A549 (cell line): ENCODE measurements at regions of chr17 and their contacts with region 1.

Region 1: GRCh38 chr17:57987580-57988421 is at the start of gene VEZF1:
- DNase-seq: peak; percentile 76 to 85
- ATAC-seq: peak; percentile 65 to 70
- H3K4me3 ChIP-seq: peak within 1 kb of the TSS; percentile 77
- H3K27ac ChIP-seq: peak within 1 kb of the TSS; percentile 96 to 98
- H3K4me1 ChIP-seq: peaks cover 75% of the 10 kb centered on the region
- CTCF ChIP-seq: no peak
- EP300 ChIP-seq: no peak
- POLR2A ChIP-seq: peak; percentile 18; the same call in 1 of the 2 replicates
- RAD21 ChIP-seq: 0 out of 5 replicates have a peak, but pooled peaks of 1 of the 2 experiments have one; percentile 9
- polyA plus RNA-seq, gene VEZF1: 57.7 and 63.8 TPM in 2 replicates

Region 2: GRCh38 chr17:57685505-57686132 is 302.2 kb before region 1 on chr17:
- CTCF ChIA-PET with region 1: no interaction called
- POLR2A ChIA-PET with region 1: no interaction called
- DNase-seq: no peak
- ATAC-seq: 0 out of 6 replicates have a peak, but pooled peaks of 1 of the 2 experiments have one; percentile 27
- H3K4me3 ChIP-seq: no peak overlapping the region
- H3K27ac ChIP-seq: no peak overlapping the region
- H3K4me1 ChIP-seq: no peaks in the 10 kb centered on the region
- CTCF ChIP-seq: no peak
- EP300 ChIP-seq: no peak
- POLR2A ChIP-seq: no peak
- RAD21 ChIP-seq: no peak

Region 3: DNA sequence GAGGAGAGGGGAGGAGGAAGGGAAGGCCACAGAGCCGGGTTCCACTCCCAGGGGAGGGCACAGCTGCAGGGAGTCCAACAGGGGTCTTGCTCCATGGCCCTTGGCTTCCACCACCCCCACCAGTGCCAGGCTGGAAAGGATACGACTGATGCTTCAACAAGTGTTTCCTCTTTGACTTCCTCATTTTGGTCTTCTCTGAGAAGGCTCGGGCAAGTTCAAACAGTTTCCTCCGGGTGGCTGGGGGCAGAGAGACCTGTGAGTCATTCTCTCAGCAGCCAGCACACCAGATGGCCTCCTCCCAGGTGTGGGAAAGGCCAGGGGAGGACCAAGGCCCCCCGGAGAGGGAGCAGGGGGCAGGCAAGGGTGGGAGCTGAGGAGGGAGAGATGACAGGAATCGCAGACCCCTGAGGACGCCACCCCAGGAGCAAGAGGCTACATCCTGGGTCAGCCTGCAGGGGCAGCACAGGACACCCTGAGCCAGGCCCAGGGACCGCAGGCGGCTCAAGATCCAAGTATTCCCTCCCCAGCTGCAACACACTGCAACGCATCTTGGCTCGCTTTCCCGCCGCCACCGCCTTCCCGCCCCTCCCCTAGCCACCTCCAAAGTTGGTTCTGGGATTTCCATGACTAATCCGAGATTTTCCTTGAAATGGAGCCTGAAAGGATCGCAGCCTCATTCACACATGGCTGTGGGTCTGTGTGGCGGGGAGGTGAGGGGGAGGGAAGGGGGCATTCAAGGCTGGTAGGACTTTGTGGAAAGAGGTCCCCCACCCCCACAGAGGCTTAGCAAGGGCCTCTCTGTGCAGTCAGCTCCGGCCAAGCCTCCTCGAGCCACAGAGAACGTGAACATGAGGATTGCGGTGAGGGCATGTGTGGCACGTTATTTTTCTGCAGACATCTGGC is 119.5 kb before region 1 on chr17:
- CTCF ChIA-PET with region 1: interaction called, 1,377 read pairs
- POLR2A ChIA-PET with region 1: interaction called, 5 read pairs
- DNase-seq: peak; percentile 92 to 97
- ATAC-seq: peak; percentile 84 to 91
- H3K4me3 ChIP-seq: no peak overlapping the region
- H3K27ac ChIP-seq: peak overlapping the region; percentile 92 to 95
- H3K4me1 ChIP-seq: peaks cover 69% of the 10 kb centered on the region
- CTCF ChIP-seq: peak; percentile 50
- EP300 ChIP-seq: peak; percentile 44 to 91; a peak in 4 of 5 replicates
- POLR2A ChIP-seq: no peak
- RAD21 ChIP-seq: peak in 1 of 2 experiments; percentile 75

Region 4: GRCh38 chr17:57902800-57903759 is 84.7 kb before region 1 on chr17:
- CTCF ChIA-PET with region 1: interaction called, 13 read pairs
- POLR2A ChIA-PET with region 1: interaction called, 5 read pairs
- DNase-seq: peak; percentile 95 to 99
- ATAC-seq: peak; percentile 85 to 87
- H3K4me3 ChIP-seq: no peak overlapping the region
- H3K27ac ChIP-seq: peak overlapping the region; percentile 94 to 97
- H3K4me1 ChIP-seq: peaks cover 82% of the 10 kb centered on the region
- CTCF ChIP-seq: no peak
- EP300 ChIP-seq: peak; percentile 36 to 72; a peak in 2 of 5 replicates
- POLR2A ChIP-seq: no peak
- RAD21 ChIP-seq: peak; percentile 41 to 53

Region 5: GRCh38 chr17:57955183-57955931 is 32.4 kb before region 1 on chr17 and contains the start of gene CUEDC1:
- CTCF ChIA-PET with region 1: interaction called, 386 read pairs
- POLR2A ChIA-PET with region 1: interaction called, 36 read pairs
- DNase-seq: peak; percentile 69 to 76
- ATAC-seq: peak; percentile 69 to 79
- H3K4me3 ChIP-seq: peak within 1 kb of the TSS; percentile 92
- H3K27ac ChIP-seq: peak within 1 kb of the TSS; percentile 93 to 100
- H3K4me1 ChIP-seq: peaks cover 67% of the 10 kb centered on the region
- CTCF ChIP-seq: peak; percentile 33; the same call in 2 of the 3 replicates
- EP300 ChIP-seq: no peak
- POLR2A ChIP-seq: peak; percentile 70
- RAD21 ChIP-seq: peak; percentile 9 to 40; a peak in 2 of 5 replicates
- polyA plus RNA-seq, gene CUEDC1: 44.3 and 54.8 TPM in 2 replicates

Region 6: DNA sequence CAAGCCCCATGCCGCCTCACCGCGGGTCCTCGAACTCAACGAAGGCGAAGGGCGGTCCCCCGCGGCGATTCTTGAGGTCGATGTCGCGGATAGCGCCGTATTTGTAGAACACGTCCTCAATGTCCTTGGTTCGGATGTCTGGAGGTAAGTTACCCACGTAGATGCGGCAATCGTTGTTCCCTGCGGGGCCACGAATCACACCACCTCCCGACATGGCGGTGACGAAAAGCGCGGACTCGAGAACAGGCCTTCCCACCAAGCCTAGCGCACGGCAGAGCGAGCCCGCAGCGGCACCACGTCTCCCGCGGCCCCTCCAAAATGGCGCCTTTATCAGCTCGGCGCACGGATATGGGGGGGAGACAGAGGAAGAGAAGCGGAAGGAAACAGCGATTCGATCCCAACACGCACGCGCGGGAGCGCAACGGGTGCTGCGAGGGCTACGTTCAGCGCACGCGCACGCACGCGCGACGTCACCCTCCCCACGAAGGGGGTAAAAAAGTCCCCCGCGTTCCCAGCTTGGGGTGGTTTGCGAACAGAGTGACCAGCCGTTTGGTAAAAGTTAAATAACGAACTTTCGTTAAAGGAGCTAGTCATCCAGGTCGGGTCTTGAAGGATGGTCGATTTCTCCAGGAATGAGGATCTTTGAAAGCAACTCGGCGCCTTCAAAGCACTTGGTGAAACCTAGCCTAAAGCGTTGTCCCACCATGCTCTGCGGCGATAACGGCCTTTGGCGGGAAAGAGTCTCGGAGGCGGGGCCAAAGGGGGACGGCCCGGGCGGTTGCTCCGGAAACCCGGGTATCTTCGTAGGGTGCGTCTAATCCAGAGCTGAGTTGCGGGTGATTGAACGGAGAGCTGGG is 19.4 kb after region 1 on chr17 and contains the start of gene SRSF1:
- CTCF ChIA-PET with region 1: interaction called, 9 read pairs
- POLR2A ChIA-PET with region 1: interaction called, 19 read pairs
- DNase-seq: peak; percentile 98 to 99
- ATAC-seq: peak; percentile 89 to 92
- H3K4me3 ChIP-seq: peak within 1 kb of the TSS; percentile 71
- H3K27ac ChIP-seq: peak within 1 kb of the TSS; percentile 95 to 97
- H3K4me1 ChIP-seq: peaks cover 39% of the 10 kb centered on the region
- CTCF ChIP-seq: no peak
- EP300 ChIP-seq: no peak
- POLR2A ChIP-seq: peak; percentile 98
- RAD21 ChIP-seq: no peak
- polyA plus RNA-seq, gene SRSF1: 332 and 490 TPM in 2 replicates

Region 7: DNA sequence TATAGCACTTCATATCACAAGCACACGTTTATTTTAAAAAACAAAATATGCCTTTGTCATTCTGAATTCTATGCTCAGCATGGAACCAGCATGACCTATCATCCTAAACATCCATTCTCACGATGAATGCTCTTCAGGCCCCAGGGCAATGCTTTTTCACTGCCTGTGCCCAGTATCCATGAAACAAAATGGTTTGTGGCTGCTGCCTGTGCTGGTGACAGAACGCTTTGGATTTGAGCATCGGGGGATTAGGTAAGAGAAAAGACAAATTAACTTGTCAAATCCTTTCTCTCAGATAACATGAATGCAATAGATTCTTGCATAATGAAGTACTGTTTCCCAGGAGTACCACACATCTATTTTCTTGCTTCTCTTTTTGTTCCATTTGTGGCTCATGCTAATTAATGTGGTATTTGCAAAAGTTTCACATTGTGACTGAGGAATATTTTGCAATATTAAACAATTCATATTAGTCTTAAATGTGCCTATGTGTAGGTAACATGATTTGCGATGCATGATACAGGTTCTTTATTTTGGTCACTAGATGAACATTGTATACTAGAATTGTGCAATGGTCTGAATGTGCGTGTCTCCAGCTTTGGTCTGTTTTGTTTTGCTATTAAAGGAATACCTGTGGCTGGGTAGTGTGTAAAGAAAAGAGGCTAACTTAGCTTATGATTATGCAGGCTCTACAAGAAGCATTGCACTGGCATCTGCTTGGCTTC is 45.1 kb after region 1 on chr17:
- CTCF ChIA-PET with region 1: no interaction called
- POLR2A ChIA-PET with region 1: no interaction called
- DNase-seq: no peak
- ATAC-seq: no peak
- H3K4me3 ChIP-seq: no peak overlapping the region
- H3K27ac ChIP-seq: no peak overlapping the region
- H3K4me1 ChIP-seq: no peaks in the 10 kb centered on the region
- CTCF ChIP-seq: no peak
- EP300 ChIP-seq: no peak
- POLR2A ChIP-seq: no peak
- RAD21 ChIP-seq: no peak

Region 8: DNA sequence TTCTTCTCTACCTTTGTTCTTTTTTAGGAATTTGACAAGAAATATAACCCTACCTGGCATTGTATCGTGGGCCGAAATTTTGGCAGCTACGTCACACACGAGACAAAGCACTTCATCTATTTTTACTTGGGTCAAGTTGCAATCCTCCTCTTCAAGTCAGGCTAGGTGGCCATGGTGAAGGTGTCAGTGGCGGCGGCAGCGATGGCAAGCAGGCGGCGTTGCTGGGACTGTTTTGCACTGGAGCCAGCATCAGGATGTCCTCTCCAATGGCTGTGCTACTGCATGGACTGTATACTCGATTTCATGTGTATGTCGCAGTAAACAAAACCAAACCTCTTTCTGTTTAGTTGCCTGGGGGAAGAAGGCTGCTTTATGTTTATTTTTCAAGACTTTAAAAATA is 101.3 kb after region 1 on chr17:
- CTCF ChIA-PET with region 1: no interaction called
- POLR2A ChIA-PET with region 1: no interaction called
- DNase-seq: no peak
- ATAC-seq: no peak
- H3K4me3 ChIP-seq: no peak overlapping the region
- H3K27ac ChIP-seq: no peak overlapping the region
- H3K4me1 ChIP-seq: peaks cover 12% of the 10 kb centered on the region
- CTCF ChIP-seq: no peak
- EP300 ChIP-seq: no peak
- POLR2A ChIP-seq: no peak
- RAD21 ChIP-seq: no peak